CD4-positive, alpha-beta T cell (primary cell): ENCODE measurements at regions of chr18 and their contacts with region 1.

Region 1: DNA sequence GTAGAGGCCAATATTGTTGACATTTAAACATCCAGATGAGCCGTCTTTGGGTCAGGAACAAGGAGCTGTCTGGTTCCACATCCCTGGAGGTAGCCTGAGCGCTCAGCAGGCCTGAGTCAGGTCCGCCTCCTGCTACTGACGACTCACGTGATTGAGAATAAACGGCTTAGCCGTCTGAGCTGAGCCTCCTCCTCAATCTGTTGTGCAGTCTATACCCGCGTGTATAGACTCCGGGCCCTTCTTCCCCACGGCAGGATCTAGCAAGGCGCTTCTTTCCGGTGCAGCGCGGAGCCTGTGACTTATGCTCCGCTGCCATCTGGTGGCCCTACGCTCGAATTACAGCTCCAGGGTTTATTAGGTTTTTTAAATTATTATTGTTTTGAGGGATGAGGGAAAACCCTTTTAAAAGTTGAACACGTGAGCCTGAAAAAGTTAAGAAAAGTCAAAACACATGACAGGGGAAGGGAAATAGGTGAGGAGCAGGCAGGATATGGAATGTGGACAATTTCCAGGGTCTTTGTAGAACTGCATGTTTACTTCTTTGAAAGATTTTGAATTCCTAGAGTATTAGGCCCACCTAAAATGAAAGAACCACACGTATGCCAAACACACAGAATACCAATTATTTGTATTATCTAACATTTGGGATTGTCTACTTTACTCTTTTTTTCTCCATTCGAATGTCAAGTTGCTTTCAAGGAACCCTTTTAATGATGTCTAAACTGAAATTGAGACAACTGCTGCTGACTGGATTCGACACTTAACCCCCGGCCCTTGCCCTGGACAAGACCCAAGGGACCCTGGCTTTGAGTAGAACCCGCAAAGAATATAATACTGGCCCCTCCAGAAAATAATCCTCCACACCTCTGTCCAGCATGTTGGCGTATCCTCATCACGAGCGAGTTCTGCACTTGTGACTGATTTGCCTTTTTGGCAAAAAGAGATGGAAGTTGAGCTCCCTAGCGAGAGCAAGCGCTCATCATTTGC is 112.4 kb upstream of the ZNF236 start:
- DNase-seq: peak; percentile 41 to 80 (median 52)
- ATAC-seq: peak; percentile 97
- H3K4me3 ChIP-seq: no peak overlapping the region
- H3K4me3 Mint-ChIP-seq: no peak overlapping the region
- H3K27ac ChIP-seq: no peak overlapping the region
- H3K27ac Mint-ChIP-seq: no peak overlapping the region
- H3K4me1 ChIP-seq: peaks cover 5% of the 10 kb centered on the region
- H3K4me1 Mint-ChIP-seq: peaks cover 11% of the 10 kb centered on the region
- H3K27me3 ChIP-seq: no peaks in the 10 kb centered on the region
- H3K27me3 Mint-ChIP-seq: peaks cover 5% of the 10 kb centered on the region
- CTCF ChIP-seq: peak; percentile 90

Region 2: GRCh38 chr18:76721207-76721996 is 11.4 kb after region 1 on chr18:
- CTCF ChIA-PET with region 1: interaction called, 5 read pairs
- POLR2A ChIA-PET with region 1: interaction called, 14 read pairs
- intact Hi-C with region 1: no loop called
- DNase-seq: peak; percentile 27 to 90 (median 58)
- ATAC-seq: peak; percentile 92
- H3K4me3 ChIP-seq: peak overlapping the region; percentile 29
- H3K4me3 Mint-ChIP-seq: peak overlapping the region; percentile 76
- H3K27ac ChIP-seq: no peak overlapping the region
- H3K27ac Mint-ChIP-seq: peak overlapping the region; percentile 76
- H3K4me1 ChIP-seq: peaks cover 60% of the 10 kb centered on the region
- H3K4me1 Mint-ChIP-seq: peaks cover 57% of the 10 kb centered on the region
- H3K27me3 ChIP-seq: no peaks in the 10 kb centered on the region
- H3K27me3 Mint-ChIP-seq: no peaks in the 10 kb centered on the region
- CTCF ChIP-seq: no peak

Region 3: GRCh38 chr18:76765649-76766048 is 55.7 kb after region 1 on chr18:
- CTCF ChIA-PET with region 1: no interaction called
- POLR2A ChIA-PET with region 1: no interaction called
- intact Hi-C with region 1: no loop called
- DNase-seq: no peak
- ATAC-seq: no peak
- H3K4me3 ChIP-seq: no peak overlapping the region
- H3K4me3 Mint-ChIP-seq: no peak overlapping the region
- H3K27ac ChIP-seq: no peak overlapping the region
- H3K27ac Mint-ChIP-seq: no peak overlapping the region
- H3K4me1 ChIP-seq: peaks cover 13% of the 10 kb centered on the region
- H3K4me1 Mint-ChIP-seq: peaks cover 19% of the 10 kb centered on the region
- H3K27me3 ChIP-seq: peaks cover 0 to 4% of the 10 kb centered on the region in 2 experiments
- H3K27me3 Mint-ChIP-seq: peaks cover 5% of the 10 kb centered on the region
- CTCF ChIP-seq: no peak